CD8-positive, alpha-beta T cell (primary cell): ENCODE measurements at regions of chr3 and their contacts with region 1.

Region 1: DNA sequence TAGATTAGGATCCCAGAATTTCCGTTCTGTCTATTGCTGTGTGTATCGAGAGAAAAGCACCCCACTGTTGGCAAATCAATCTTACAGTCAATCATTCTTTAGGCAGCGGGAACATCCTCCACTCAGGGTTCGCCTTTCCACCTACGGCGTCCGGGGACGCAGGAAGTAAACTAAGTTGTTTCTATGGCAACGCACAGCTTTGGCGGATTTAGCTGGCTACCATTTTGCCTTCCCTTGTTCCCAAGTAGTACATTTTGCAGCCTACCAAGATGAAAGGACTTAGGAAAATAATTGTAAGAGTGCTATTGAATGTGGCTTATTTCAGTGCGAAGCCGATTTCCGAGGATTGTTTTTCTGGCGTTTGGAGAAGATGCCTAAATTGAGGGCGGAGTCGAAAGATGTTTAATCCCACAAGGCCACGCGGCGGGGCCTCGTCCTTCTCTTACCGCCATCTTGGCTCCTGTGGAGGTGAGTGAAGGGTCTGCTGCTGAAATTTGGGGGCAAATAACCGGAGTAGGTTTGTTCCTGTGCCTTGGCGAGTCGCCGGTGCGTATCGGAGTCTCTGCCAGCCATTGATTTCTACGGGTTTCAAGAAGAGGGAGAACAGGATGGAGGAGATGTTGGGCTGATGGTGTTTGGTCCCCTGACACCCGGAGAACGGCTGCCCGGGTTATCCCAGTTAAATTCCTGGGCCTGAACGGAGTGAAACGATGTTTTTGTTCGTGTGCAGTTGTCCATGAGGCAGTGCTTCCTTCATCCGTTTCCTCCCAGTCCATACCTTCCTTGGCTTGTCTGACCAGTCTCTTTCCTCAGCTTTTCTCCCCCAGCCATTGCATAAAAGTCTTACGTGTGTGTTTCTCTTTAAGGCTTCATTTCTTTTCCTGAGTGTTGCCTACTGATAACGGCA is at the start of gene RPL35A:
- DNase-seq: peak; percentile 74 to 96 (median 81)
- ATAC-seq: peak; percentile 91
- H3K4me3 ChIP-seq: peak within 1 kb of the TSS; percentile 59 to 85
- H3K4me3 Mint-ChIP-seq: peak within 1 kb of the TSS; percentile 98
- H3K27ac ChIP-seq: peak within 1 kb of the TSS; percentile 91 to 97
- H3K27ac Mint-ChIP-seq: peak within 1 kb of the TSS; percentile 98
- H3K4me1 ChIP-seq: peaks cover 39% of the 10 kb centered on the region
- H3K4me1 Mint-ChIP-seq: peaks cover 43% of the 10 kb centered on the region
- H3K27me3 ChIP-seq: no peaks in the 10 kb centered on the region
- H3K27me3 Mint-ChIP-seq: no peaks in the 10 kb centered on the region
- CTCF ChIP-seq: no peak
- total RNA-seq, gene RPL35A: 2,004 to 2,100 TPM

Region 2: GRCh38 chr3:197749601-197750395 is 200.2 kb before region 1 on chr3 and contains the start of gene FYTTD1:
- CTCF ChIA-PET with region 1: no interaction called
- POLR2A ChIA-PET with region 1: no interaction called
- intact Hi-C with region 1: loop called in 1 of 2 experiments (anchors 5 kb)
- DNase-seq: peak; percentile 72 to 95 (median 89)
- ATAC-seq: peak; percentile 76
- H3K4me3 ChIP-seq: peak within 1 kb of the TSS; percentile 57 to 73
- H3K4me3 Mint-ChIP-seq: peak within 1 kb of the TSS; percentile 96
- H3K27ac ChIP-seq: peak within 1 kb of the TSS; percentile 64 to 79
- H3K27ac Mint-ChIP-seq: peak within 1 kb of the TSS; percentile 98
- H3K4me1 ChIP-seq: peaks cover 33% of the 10 kb centered on the region
- H3K4me1 Mint-ChIP-seq: peaks cover 46% of the 10 kb centered on the region
- H3K27me3 ChIP-seq: no peaks in the 10 kb centered on the region
- H3K27me3 Mint-ChIP-seq: no peaks in the 10 kb centered on the region
- CTCF ChIP-seq: peak; percentile 15
- total RNA-seq, gene FYTTD1: 80.9 to 88.0 TPM

Region 3: GRCh38 chr3:197959898-197960693 is 10.1 kb after region 1 on chr3 and contains the start of gene LMLN:
- CTCF ChIA-PET with region 1: no interaction called
- POLR2A ChIA-PET with region 1: interaction called, 10 read pairs
- intact Hi-C with region 1: loop called (anchors 1 kb)
- DNase-seq: peak; percentile 87 to 98 (median 95)
- ATAC-seq: peak; percentile 91
- H3K4me3 ChIP-seq: peak within 1 kb of the TSS; percentile 89 to 90
- H3K4me3 Mint-ChIP-seq: peak within 1 kb of the TSS; percentile 91
- H3K27ac ChIP-seq: peak within 1 kb of the TSS; percentile 82 to 88
- H3K27ac Mint-ChIP-seq: peak within 1 kb of the TSS; percentile 92
- H3K4me1 ChIP-seq: peaks cover 32% of the 10 kb centered on the region
- H3K4me1 Mint-ChIP-seq: peaks cover 55% of the 10 kb centered on the region
- H3K27me3 ChIP-seq: no peaks in the 10 kb centered on the region
- H3K27me3 Mint-ChIP-seq: no peaks in the 10 kb centered on the region
- CTCF ChIP-seq: no peak
- total RNA-seq, gene LMLN: 4.4 to 6.4 TPM